Posterior cingulate gyrus (tissue), 11 donors: ENCODE measurements at regions of chr4 and their contacts with region 1.

Region 1: GRCh38 chr4:82373816-82374625 is at the start of gene HNRNPD:
- DNase-seq: peak; percentile 90 to 99 (median 96)

Region 2: GRCh38 chr4:82284858-82285805 is 88.9 kb before region 1 on chr4:
- intact Hi-C with region 1: loop called (anchors 5 kb)
- DNase-seq: peak; percentile 98 to 100 (median 99)

Region 3: DNA sequence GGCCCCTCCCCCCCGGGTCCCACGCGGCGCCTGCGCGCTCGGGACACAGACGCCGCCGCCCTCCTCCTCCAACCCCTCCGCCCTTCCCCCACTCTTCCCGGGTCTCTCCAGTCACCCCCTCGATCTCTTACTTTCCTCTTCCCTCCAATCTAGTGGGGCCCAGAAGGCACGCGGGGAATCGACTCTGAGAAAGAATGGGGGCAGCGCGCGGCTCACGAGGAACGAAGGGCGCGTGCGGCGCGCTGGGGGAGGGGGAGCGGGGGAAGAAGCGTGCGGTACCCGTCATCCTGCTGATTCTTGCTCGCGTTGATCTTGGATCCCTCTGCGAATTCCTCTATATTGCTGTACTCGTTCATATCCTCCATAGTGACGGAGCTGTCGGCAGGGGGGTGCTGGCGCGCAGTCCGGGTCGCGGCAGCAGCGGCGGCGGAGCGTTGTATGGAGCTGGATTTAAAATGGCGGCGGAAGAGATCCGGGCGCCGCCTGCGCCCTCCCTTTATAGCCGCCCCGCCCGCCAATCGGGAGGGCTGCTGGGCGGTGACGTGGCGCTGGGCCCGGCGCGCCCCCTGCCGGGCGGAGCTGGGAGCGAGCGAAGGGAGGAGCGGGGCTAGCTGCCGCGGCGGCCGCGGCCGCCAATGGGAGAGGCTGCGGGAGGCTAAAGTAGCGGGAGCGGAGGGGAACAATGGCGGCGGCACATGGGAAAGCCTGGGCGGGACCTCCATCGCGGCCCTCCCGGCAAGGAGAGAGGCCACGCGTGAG is 55.1 kb after region 1 on chr4:
- intact Hi-C with region 1: loop called (anchors 1 kb)
- DNase-seq: peak; percentile 84 to 99 (median 90)

Region 4: DNA sequence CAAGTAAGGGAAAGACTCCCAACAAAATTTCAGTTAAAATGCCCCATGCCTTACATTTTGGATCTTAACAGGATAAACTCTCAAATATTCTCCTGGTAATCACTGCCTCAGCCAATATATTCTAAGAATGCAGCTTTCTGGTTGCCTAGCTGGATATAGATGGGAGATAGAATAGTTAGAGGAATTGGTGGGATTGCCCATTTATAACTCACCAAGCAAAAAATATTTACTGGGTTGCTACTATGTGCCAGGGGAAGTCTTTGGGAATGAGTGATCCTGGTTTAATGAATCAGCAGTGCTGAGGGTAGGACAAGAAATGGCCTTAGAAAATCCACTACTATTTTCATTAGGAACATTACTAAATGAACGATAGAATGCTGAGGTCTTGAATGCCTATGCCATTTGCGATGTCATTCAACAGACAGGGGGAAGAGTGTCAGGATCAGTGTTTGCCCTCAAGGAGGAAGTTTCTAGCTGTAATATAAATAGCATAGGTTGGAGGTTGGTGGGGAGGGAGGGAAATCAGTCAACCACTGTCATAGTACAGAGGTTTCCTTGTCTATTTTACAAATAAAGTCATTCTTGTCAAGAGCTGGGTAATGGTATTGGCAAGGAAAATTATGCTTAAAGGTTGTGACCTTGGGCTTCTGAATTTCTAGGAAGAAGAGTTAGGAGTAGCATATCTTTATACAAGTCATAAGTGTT is 119.9 kb after region 1 on chr4:
- intact Hi-C with region 1: no loop called
- DNase-seq: no peak

Region 5: DNA sequence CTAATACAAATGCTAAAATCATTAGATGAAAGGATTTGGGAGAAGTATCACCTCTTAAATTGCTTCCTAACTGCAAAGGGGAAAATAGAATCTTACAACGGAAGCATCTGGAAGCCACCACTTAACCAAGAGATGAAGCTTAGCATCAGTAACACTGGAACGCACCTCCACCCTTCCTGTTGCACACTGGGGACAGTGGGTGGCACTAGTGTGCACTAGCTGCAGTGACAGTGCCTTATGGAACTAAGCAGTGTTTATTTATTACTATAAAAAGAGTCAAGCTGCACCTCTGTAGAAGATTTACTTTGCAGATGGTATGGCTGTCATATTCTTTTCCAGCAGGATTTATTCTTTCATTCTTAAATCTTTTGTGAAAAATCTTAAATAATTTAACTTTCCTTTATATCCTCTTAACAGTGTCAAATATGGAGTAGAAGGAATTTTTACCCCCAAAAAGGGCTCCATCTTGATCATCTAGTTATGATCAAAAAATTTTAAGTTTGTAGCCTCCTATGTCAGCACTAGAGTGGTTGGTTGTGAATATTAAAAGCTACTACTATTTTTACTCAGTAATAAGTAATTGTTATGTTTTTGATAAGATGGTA is 347.9 kb after region 1 on chr4:
- intact Hi-C with region 1: loop called (anchors 10 kb)
- DNase-seq: peak in 9 of 10 donors; percentile 41 to 95 (median 63)

Region 6: DNA sequence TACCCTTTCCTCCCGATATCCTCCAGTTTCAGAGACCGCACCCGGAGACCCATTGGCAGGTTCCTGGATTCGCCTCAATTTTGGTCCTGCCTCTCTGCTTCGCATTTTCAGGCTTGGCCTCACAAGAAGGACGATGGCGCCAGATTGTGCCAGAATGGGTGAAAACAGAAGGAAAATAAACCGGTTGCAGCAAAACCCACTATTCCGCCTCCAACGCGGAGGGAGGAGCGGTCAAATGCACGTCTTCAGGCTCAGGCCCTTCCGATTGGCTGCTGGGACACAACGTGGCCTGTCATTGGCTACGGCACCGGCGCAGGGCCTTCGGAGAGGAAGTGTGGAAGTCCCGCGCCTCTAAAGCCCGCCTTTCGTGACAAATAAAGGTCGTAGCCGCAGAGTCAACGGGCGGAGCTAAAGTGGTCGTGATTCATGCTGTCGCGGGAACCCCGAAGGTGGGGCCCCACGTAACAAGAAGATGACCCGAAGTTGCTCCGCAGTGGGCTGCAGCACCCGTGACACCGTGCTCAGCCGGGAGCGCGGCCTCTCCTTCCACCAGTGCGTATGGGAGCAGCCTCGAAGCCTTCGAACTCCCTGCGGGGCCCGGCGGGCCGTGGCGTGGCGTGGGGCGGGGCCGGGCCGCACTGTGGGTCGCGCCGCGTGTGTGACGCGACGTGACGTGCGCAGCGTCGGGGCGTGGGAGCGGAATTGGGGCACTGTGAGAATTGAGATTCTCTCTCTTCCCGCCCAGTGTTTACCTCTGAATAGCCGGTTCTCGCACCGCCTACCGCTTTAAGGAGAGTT is 526.5 kb after region 1 on chr4 and contains the start of gene THAP9:
- intact Hi-C with region 1: loop called (anchors 5 kb)
- DNase-seq: peak; percentile 97 to 100 (median 99)

Region 7: GRCh38 chr4:83231620-83232076 is 857.6 kb after region 1 on chr4:
- intact Hi-C with region 1: no loop called
- DNase-seq: no peak